MCF 10A (cell line): ENCODE measurements at regions of chr1 and their contacts with region 1.

Region 1: DNA sequence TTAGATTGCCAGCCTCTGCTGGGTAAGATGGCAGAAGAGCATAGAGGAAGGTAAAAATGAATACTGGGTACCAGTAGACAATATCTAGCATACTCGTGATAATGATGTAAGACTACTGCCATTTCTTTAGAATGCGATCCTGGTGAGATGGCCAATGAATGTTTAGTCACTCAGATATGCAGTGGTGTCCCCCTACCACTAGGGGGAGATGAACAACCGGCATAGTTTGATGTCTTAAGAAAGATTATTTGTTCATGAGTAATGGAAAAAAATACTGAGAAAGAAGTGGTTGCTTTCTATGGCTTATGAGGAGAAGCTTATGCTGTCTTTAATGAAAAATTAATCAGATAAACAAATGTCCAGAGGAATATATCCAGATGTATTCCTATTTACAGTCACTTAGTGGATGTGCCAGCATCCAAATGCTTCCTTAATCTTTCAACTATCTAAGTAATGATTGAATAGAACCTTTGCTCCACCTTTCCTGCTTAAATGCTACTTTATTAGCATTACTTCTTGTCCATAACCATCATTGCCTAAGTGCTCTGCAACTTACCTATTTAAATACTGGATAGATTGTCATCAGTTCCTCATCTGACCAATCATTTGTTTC is 256.6 kb downstream of the ST6GALNAC3 start:
- DNase-seq: peak; percentile 78
- H3K4me3 Mint-ChIP-seq: no peak overlapping the region
- H3K27ac Mint-ChIP-seq: no peak overlapping the region
- H3K4me1 Mint-ChIP-seq: no peaks in the 10 kb centered on the region
- H3K27me3 Mint-ChIP-seq: no peaks in the 10 kb centered on the region
- CTCF ChIP-seq: peak; percentile 90

Region 2: DNA sequence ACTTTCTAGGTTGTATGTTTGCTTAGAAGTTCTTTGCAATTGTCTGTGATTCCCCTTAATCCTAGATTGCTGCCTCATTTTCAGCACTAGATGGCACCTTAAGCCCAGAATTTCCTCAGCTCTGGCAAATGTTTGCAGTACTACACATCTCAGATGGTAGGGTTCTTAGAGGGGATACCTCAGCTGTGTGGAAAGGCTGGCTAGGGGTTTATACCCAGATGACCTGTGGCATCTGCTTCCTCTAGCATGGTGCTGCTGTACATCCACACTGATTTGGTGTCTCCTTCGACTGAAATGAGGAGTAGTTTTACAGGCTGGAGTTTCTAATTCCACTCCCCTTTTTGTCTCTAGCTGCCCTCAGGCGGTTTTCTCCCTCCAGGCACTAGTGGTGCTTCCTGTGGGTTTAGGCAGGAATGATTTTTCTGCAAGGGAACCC is 422.4 kb before region 1 on chr1:
- CTCF ChIA-PET with region 1: interaction called, 3 read pairs
- POLR2A ChIA-PET with region 1: no interaction called
- intact Hi-C with region 1: loop called (anchors 2 kb)
- DNase-seq: peak; percentile 72
- H3K4me3 Mint-ChIP-seq: no peak overlapping the region
- H3K27ac Mint-ChIP-seq: no peak overlapping the region
- H3K4me1 Mint-ChIP-seq: no peaks in the 10 kb centered on the region
- H3K27me3 Mint-ChIP-seq: peaks cover 33% of the 10 kb centered on the region
- CTCF ChIP-seq: peak; percentile 63

Region 3: GRCh38 chr1:76542359-76542758 is 211.3 kb after region 1 on chr1:
- CTCF ChIA-PET with region 1: no interaction called
- POLR2A ChIA-PET with region 1: no interaction called
- intact Hi-C with region 1: no loop called
- DNase-seq: no peak
- H3K4me3 Mint-ChIP-seq: no peak overlapping the region
- H3K27ac Mint-ChIP-seq: no peak overlapping the region
- H3K4me1 Mint-ChIP-seq: no peaks in the 10 kb centered on the region
- H3K27me3 Mint-ChIP-seq: no peaks in the 10 kb centered on the region
- CTCF ChIP-seq: no peak

Region 4: GRCh38 chr1:76868154-76868882 is 537.2 kb after region 1 on chr1:
- CTCF ChIA-PET with region 1: interaction called, 4 read pairs
- POLR2A ChIA-PET with region 1: no interaction called
- intact Hi-C with region 1: loop called (anchors 1 kb)
- DNase-seq: peak; percentile 21
- H3K4me3 Mint-ChIP-seq: peak overlapping the region; percentile 64
- H3K27ac Mint-ChIP-seq: no peak overlapping the region
- H3K4me1 Mint-ChIP-seq: no peaks in the 10 kb centered on the region
- H3K27me3 Mint-ChIP-seq: peaks cover 39% of the 10 kb centered on the region
- CTCF ChIP-seq: peak; percentile 32

Region 5: DNA sequence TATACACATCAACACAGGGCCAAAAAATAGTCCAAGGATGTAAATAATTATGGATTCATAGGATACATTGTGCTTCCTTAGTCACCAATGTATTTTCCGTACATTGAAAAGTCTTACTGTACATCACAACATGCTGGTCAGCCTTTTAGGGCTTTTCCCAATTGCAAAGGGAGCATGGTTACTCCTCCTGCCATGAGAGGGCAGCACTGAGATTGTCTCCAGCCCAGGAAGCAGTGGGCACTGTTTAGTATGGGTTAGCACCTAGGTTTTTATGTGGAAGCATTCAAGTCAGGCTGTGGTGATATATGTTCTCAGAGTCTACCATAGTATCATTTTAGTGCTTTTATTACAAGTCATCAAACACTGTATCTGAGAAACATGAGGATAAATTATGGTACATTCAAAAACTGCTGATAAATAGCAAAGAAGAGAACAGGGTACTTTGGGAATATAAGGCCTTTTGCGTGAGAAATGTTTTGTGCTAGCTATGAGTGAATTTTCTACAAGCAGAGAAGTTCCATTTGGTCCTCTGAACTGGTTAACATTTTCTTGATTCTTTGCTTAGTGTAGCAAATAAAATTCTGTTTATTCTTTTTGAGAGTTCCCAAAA is 570.2 kb after region 1 on chr1:
- CTCF ChIA-PET with region 1: interaction called, 6 read pairs
- POLR2A ChIA-PET with region 1: no interaction called
- intact Hi-C with region 1: loop called (anchors 1 kb)
- DNase-seq: peak; percentile 69
- H3K4me3 Mint-ChIP-seq: no peak overlapping the region
- H3K27ac Mint-ChIP-seq: no peak overlapping the region
- H3K4me1 Mint-ChIP-seq: no peaks in the 10 kb centered on the region
- H3K27me3 Mint-ChIP-seq: no peaks in the 10 kb centered on the region
- CTCF ChIP-seq: peak; percentile 53

Region 6: GRCh38 chr1:77031106-77031662 is 700.1 kb after region 1 on chr1:
- CTCF ChIA-PET with region 1: interaction called, 15 read pairs
- POLR2A ChIA-PET with region 1: no interaction called
- intact Hi-C with region 1: loop called (anchors 1 kb)
- DNase-seq: peak; percentile 63
- H3K4me3 Mint-ChIP-seq: no peak overlapping the region
- H3K27ac Mint-ChIP-seq: no peak overlapping the region
- H3K4me1 Mint-ChIP-seq: peaks cover 5% of the 10 kb centered on the region
- H3K27me3 Mint-ChIP-seq: no peaks in the 10 kb centered on the region
- CTCF ChIP-seq: peak; percentile 22

Region 7: DNA sequence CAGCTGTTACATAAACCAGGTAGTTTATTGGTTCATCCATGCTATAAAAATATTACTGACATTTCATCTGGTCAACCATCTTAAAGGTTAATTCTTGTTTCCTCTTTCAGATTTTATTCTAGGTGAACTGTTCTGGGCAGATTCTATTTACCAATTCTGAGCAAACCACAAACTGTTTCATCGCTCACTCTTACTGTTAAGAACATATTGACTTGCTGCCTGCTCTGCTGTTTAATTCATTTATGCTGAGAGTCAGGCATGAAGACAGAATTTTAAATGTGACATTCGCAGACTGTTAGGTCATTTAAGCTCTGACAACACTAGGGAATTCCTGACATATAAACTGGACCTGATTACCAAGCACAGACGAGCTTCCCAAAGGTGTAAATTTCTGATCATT is 789.9 kb after region 1 on chr1:
- CTCF ChIA-PET with region 1: interaction called, 15 read pairs
- POLR2A ChIA-PET with region 1: no interaction called
- intact Hi-C with region 1: loop called (anchors 1 kb)
- DNase-seq: no peak
- H3K4me3 Mint-ChIP-seq: no peak overlapping the region
- H3K27ac Mint-ChIP-seq: no peak overlapping the region
- H3K4me1 Mint-ChIP-seq: peaks cover 2% of the 10 kb centered on the region
- H3K27me3 Mint-ChIP-seq: no peaks in the 10 kb centered on the region
- CTCF ChIP-seq: no peak

Region 8: DNA sequence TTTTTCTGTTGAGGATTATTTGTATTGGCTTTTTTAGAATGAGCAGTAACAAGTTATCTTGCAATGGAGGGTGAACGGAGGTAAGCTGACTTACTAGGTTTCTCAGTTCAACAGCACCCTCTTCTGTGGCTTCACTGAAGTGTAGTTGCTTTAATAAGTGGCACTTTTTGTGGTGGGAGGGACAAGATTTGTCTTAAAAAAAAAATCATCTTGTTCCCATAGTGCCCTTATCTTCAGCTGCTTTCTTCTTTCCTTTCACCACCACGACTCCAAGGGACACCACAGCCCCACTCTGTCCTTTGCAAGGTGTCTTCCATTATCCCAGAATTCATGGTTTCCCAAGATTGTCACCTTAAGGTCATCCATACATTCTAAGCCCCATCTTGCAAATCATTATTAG is 795.2 kb after region 1 on chr1:
- CTCF ChIA-PET with region 1: interaction called, 15 read pairs
- POLR2A ChIA-PET with region 1: no interaction called
- intact Hi-C with region 1: loop called (anchors 1 kb)
- DNase-seq: peak; percentile 68
- H3K4me3 Mint-ChIP-seq: no peak overlapping the region
- H3K27ac Mint-ChIP-seq: no peak overlapping the region
- H3K4me1 Mint-ChIP-seq: peaks cover 10% of the 10 kb centered on the region
- H3K27me3 Mint-ChIP-seq: no peaks in the 10 kb centered on the region
- CTCF ChIP-seq: peak; percentile 79